ENCODE measurements at regions of chr2 and their contacts with region 1.

Region 1: DNA sequence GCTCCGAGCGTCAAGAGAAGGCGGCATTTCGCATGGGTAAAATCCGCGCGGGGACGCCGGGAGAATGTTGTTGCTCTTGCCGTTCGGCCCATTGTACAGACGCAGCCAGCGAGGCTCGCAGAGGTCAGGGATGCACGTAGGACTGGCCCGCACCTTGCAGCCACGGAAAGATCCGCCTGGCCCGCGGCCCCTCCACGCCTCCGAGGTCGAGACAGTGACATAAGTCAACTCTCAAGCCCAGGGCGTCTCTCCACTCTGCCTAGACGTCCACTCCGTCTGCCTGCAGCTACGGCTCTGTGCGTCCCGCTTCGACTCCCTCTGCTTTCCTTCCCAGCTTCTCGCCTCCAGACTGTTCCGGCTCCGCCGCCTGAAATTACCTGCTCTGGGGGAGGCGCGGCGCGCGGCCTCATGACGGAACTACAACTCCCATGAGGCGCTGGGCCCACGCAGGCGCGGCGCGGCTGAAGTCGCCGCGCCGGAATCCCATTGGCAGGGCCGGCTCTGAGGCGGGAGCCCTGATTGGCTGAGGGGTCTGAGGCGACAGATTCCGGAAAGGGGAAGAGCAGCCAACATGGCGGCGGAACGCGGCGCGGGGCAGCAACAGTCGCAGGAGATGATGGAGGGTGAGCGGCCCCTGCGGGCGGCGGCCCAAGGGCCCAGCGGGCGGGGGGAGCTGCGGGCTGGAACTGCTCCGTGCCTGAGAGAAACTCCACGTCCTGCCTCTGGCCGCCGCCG is at the start of gene PPP1R7:
- DNase-seq: peak; percentile 91 to 98 (median 94)
- ATAC-seq: peak; percentile 79
- H3K4me3 ChIP-seq: peak within 1 kb of the TSS; percentile 95 to 99
- H3K4me3 Mint-ChIP-seq: peak within 1 kb of the TSS; percentile 99
- H3K27ac ChIP-seq: peak within 1 kb of the TSS; percentile 67 to 70
- H3K27ac Mint-ChIP-seq: peak within 1 kb of the TSS; percentile 95
- H3K4me1 ChIP-seq: peaks cover 21% of the 10 kb centered on the region
- H3K4me1 Mint-ChIP-seq: peaks cover 48% of the 10 kb centered on the region
- H3K27me3 ChIP-seq: no peaks in the 10 kb centered on the region
- H3K27me3 Mint-ChIP-seq: no peaks in the 10 kb centered on the region
- CTCF ChIP-seq: peak; percentile 51
- total RNA-seq, gene PPP1R7: 47.5 to 50.9 TPM

Region 2: GRCh38 chr2:240586198-240586918 is 563.7 kb before region 1 on chr2 and contains the start of gene CAPN10:
- CTCF ChIA-PET with region 1: no interaction called
- POLR2A ChIA-PET with region 1: no interaction called
- intact Hi-C with region 1: loop called in 1 of 2 experiments (anchors 10 kb)
- DNase-seq: peak; percentile 92 to 98 (median 97)
- ATAC-seq: peak; percentile 80
- H3K4me3 ChIP-seq: peak within 1 kb of the TSS; percentile 82 to 95
- H3K4me3 Mint-ChIP-seq: peak within 1 kb of the TSS; percentile 88
- H3K27ac ChIP-seq: peak within 1 kb of the TSS; percentile 86 to 90
- H3K27ac Mint-ChIP-seq: peak within 1 kb of the TSS; percentile 94
- H3K4me1 ChIP-seq: peaks cover 37% of the 10 kb centered on the region
- H3K4me1 Mint-ChIP-seq: peaks cover 57% of the 10 kb centered on the region
- H3K27me3 ChIP-seq: no peaks in the 10 kb centered on the region
- H3K27me3 Mint-ChIP-seq: no peaks in the 10 kb centered on the region
- CTCF ChIP-seq: no peak
- total RNA-seq, gene CAPN10: 65.9 to 68.9 TPM

Region 3: GRCh38 chr2:240851078-240851991 is 298.8 kb before region 1 on chr2:
- CTCF ChIA-PET with region 1: no interaction called
- POLR2A ChIA-PET with region 1: no interaction called
- intact Hi-C with region 1: loop called (anchors 2 to 5 kb)
- DNase-seq: peak; percentile 73 to 91 (median 81)
- ATAC-seq: peak; percentile 95
- H3K4me3 ChIP-seq: no peak overlapping the region
- H3K4me3 Mint-ChIP-seq: no peak overlapping the region
- H3K27ac ChIP-seq: no peak overlapping the region
- H3K27ac Mint-ChIP-seq: no peak overlapping the region
- H3K4me1 ChIP-seq: no peaks in the 10 kb centered on the region
- H3K4me1 Mint-ChIP-seq: no peaks in the 10 kb centered on the region
- H3K27me3 ChIP-seq: peaks cover 0 to 2% of the 10 kb centered on the region in 2 experiments
- H3K27me3 Mint-ChIP-seq: peaks cover 4% of the 10 kb centered on the region
- CTCF ChIP-seq: peak; percentile 91

Region 4: GRCh38 chr2:240983361-240983995 is 166.6 kb before region 1 on chr2:
- CTCF ChIA-PET with region 1: interaction called, 12 read pairs
- POLR2A ChIA-PET with region 1: no interaction called
- intact Hi-C with region 1: loop called (anchors 1 to 5 kb)
- DNase-seq: peak; percentile 15 to 81 (median 49)
- ATAC-seq: peak; percentile 94
- H3K4me3 ChIP-seq: no peak overlapping the region
- H3K4me3 Mint-ChIP-seq: no peak overlapping the region
- H3K27ac ChIP-seq: no peak overlapping the region
- H3K27ac Mint-ChIP-seq: no peak overlapping the region
- H3K4me1 ChIP-seq: no peaks in the 10 kb centered on the region
- H3K4me1 Mint-ChIP-seq: peaks cover 3% of the 10 kb centered on the region
- H3K27me3 ChIP-seq: no peaks in the 10 kb centered on the region
- H3K27me3 Mint-ChIP-seq: no peaks in the 10 kb centered on the region
- CTCF ChIP-seq: peak; percentile 65

Region 5: GRCh38 chr2:241096979-241097378 is 53.1 kb before region 1 on chr2:
- CTCF ChIA-PET with region 1: interaction called, 6 read pairs
- POLR2A ChIA-PET with region 1: interaction called, 65 read pairs
- intact Hi-C with region 1: loop called in 1 of 2 experiments (anchors 1 kb)
- DNase-seq: no peak
- ATAC-seq: no peak
- H3K4me3 ChIP-seq: no peak overlapping the region
- H3K4me3 Mint-ChIP-seq: no peak overlapping the region
- H3K27ac ChIP-seq: peak overlapping the region in 1 of 2 experiments; percentile 79
- H3K27ac Mint-ChIP-seq: peak overlapping the region; percentile 95
- H3K4me1 ChIP-seq: peaks cover 71% of the 10 kb centered on the region
- H3K4me1 Mint-ChIP-seq: peaks cover 82% of the 10 kb centered on the region
- H3K27me3 ChIP-seq: no peaks in the 10 kb centered on the region
- H3K27me3 Mint-ChIP-seq: no peaks in the 10 kb centered on the region
- CTCF ChIP-seq: no peak

Region 6: DNA sequence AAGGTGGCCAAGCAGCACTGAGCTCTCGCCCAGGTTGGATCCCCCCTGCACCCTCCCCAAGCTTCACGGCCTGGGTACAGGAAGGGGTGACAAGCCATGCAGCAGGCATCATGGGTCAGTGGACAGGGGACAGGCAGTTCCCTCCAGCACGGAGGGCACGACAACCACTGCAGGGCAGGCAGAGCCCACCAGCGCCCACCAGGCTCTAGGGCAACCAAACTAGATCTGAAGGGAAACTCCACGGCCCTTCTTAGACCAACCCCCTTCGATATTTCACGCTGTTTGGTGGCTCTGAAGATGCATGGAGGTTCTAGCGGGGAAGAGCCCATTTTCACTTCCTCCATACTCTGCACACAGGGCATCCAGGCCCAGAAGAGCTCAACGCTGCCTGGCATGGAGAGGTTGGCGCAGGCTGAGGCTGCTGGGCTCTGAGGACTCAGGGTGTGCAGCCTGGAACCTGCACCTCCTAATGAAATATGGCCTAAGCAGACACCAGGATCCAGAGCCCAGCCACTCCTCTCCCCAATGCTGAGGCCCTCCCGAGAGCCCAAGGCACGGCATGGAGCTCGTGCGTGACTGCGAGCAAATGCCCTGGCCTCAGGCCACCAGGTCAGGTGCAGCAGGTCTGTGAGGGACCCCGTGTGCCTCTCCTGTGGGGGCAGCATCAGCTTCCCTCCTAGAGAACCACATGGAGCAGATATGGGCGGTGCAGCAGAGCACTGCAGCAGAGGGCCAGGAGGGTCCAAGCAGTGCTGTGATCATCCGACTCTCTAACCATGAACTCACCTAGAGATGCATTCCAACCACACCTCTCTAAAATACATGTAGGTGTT is 39.3 kb before region 1 on chr2:
- CTCF ChIA-PET with region 1: interaction called, 11 read pairs
- POLR2A ChIA-PET with region 1: interaction called, 73 read pairs
- intact Hi-C with region 1: loop called (anchors 1 to 2 kb)
- DNase-seq: peak in 4 of 9 experiments; percentile 41 to 73 (median 56)
- ATAC-seq: peak; percentile 33
- H3K4me3 ChIP-seq: peak overlapping the region; percentile 58 to 67
- H3K4me3 Mint-ChIP-seq: peak overlapping the region; percentile 97
- H3K27ac ChIP-seq: peak overlapping the region; percentile 63 to 94
- H3K27ac Mint-ChIP-seq: peak overlapping the region; percentile 98
- H3K4me1 ChIP-seq: peaks cover 61% of the 10 kb centered on the region
- H3K4me1 Mint-ChIP-seq: peaks cover 65% of the 10 kb centered on the region
- H3K27me3 ChIP-seq: no peaks in the 10 kb centered on the region
- H3K27me3 Mint-ChIP-seq: no peaks in the 10 kb centered on the region
- CTCF ChIP-seq: no peak

Region 7: GRCh38 chr2:241421330-241421729 is 271.2 kb after region 1 on chr2:
- CTCF ChIA-PET with region 1: no interaction called
- POLR2A ChIA-PET with region 1: no interaction called
- intact Hi-C with region 1: no loop called
- DNase-seq: no peak
- ATAC-seq: no peak
- H3K4me3 ChIP-seq: no peak overlapping the region
- H3K4me3 Mint-ChIP-seq: no peak overlapping the region
- H3K27ac ChIP-seq: no peak overlapping the region
- H3K27ac Mint-ChIP-seq: no peak overlapping the region
- H3K4me1 ChIP-seq: no peaks in the 10 kb centered on the region
- H3K4me1 Mint-ChIP-seq: no peaks in the 10 kb centered on the region
- H3K27me3 ChIP-seq: no peaks in the 10 kb centered on the region
- H3K27me3 Mint-ChIP-seq: no peaks in the 10 kb centered on the region
- CTCF ChIP-seq: no peak

Region 8: DNA sequence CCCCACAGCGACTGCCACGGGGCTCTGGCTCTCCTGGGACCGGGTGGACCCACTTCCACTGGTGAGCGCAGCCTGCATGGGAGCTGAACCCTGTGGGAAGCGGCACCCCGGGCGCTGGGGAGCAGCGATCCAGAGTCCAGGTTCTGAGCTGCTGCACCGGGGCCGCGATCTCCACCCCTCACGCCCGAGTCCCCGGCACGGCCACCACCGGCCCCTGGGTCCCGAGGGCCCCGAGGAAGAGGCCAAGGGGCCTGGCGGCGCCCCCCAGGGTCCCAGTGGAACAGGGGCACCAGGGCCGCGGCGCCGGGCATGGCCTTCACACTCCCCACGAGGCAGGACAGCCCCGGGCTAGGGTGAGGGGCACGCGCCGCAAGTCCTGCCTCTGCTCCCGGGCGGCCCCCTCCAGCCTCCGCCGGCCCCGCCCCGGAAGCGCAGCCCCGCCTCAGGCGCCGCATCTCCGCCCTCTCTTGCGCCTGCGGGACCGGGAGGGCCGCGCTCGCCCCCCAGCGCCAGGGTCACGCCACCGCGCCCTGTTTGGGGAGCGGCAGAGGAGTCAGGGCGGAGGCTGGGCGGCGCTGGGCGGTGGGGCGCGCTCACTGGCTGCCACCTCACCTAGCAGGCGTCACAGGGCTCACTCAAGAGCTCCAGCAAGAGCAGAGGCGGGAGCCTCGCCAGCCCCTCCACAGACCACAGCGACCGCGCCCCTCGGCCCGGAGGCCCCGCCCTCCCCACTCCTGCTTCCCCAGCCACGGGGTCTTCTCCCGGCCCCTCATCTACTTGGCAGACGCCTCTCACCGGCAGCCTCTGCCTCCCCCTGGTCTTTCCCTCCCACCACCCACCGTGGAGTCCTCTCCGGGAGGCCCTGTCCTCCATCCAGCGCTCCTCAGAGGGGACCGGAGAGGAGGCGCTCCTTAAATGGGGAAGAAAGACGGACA is 460.0 kb after region 1 on chr2:
- CTCF ChIA-PET with region 1: no interaction called
- POLR2A ChIA-PET with region 1: no interaction called
- intact Hi-C with region 1: loop called in 1 of 2 experiments (anchors 10 kb)
- DNase-seq: peak; percentile 81 to 96 (median 92)
- ATAC-seq: peak; percentile 99
- H3K4me3 ChIP-seq: peak overlapping the region; percentile 53 to 59
- H3K4me3 Mint-ChIP-seq: peak overlapping the region; percentile 63
- H3K27ac ChIP-seq: peak overlapping the region; percentile 51 to 77
- H3K27ac Mint-ChIP-seq: peak overlapping the region; percentile 72
- H3K4me1 ChIP-seq: peaks cover 23% of the 10 kb centered on the region
- H3K4me1 Mint-ChIP-seq: peaks cover 26% of the 10 kb centered on the region
- H3K27me3 ChIP-seq: no peaks in the 10 kb centered on the region
- H3K27me3 Mint-ChIP-seq: no peaks in the 10 kb centered on the region
- CTCF ChIP-seq: peak; percentile 63